Right ventricle myocardium superior (tissue), 1 donor: ENCODE measurements at regions of chr4 and their contacts with region 1.

Region 1: GRCh38 chr4:17810260-17811077 is at the starts of genes DCAF16 and NCAPG:
- DNase-seq: peak; percentile 99
- ATAC-seq: peak; percentile 100
- total RNA-seq, gene DCAF16: 13.4 TPM
- total RNA-seq, gene NCAPG: 0.59 TPM

Region 2: GRCh38 chr4:17552427-17552826 is 258.0 kb before region 1 on chr4:
- intact Hi-C with region 1: loop called (anchors 10 kb)
- DNase-seq: no peak
- ATAC-seq: no peak

Region 3: GRCh38 chr4:17898553-17899055 is 88.1 kb after region 1 on chr4:
- intact Hi-C with region 1: no loop called
- DNase-seq: no peak
- ATAC-seq: no peak

Region 4: GRCh38 chr4:18021722-18022571 is 211.5 kb after region 1 on chr4 and contains the start of gene LCORL:
- intact Hi-C with region 1: loop called (anchors 5 kb)
- DNase-seq: peak; percentile 96
- ATAC-seq: peak; percentile 92
- total RNA-seq, gene LCORL: 7.7 TPM

Region 5: GRCh38 chr4:18366892-18367291 is 556.4 kb after region 1 on chr4:
- intact Hi-C with region 1: loop called (anchors 10 kb)
- DNase-seq: no peak
- ATAC-seq: no peak